ENCODE measurements at regions of chr14 and their contacts with region 1.

Region 1: GRCh38 chr14:91836119-91836881 is 31.0 kb downstream of the TC2N start:
- DNase-seq: peak; percentile 90
- H3K4me3 ChIP-seq: peak overlapping the region; percentile 94
- H3K4me3 Mint-ChIP-seq: peak overlapping the region; percentile 90
- H3K27ac Mint-ChIP-seq: peak overlapping the region; percentile 81
- H3K4me1 ChIP-seq: peaks cover 19% of the 10 kb centered on the region
- H3K4me1 Mint-ChIP-seq: peaks cover 9% of the 10 kb centered on the region
- H3K27me3 ChIP-seq: no peaks in the 10 kb centered on the region
- H3K27me3 Mint-ChIP-seq: no peaks in the 10 kb centered on the region
- CTCF ChIP-seq: no peak

Region 2: DNA sequence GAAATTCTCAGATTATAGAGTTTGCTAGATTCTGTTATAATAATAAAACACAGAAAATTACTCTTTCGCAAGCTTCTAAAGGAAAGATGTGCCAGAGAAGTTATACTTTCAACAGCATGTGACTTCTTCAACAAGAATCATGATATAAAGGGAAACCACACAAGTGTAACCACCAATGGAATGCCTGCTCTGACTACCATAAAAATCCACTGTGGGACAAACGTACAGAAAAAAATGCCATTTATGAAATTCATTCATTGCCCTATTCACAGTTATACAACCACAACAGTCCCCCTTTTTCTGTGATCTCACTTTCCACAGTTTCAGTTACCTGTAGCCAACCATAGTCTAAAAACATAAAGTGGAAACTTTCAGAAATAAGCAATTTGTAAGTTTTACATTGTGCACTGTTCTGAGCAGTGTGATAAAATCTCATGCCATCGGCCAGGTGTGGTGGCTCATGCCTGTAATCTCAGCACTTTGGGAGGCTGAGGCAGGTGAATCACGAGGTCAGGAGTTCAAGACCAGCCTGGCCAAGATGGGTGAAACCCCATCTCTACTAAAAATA is 107.6 kb before region 1 on chr14:
- CTCF ChIA-PET with region 1: no interaction called
- POLR2A ChIA-PET with region 1: no interaction called
- intact Hi-C with region 1: loop called (anchors 10 kb)
- DNase-seq: no peak
- H3K4me3 ChIP-seq: no peak overlapping the region
- H3K4me3 Mint-ChIP-seq: no peak overlapping the region
- H3K27ac Mint-ChIP-seq: no peak overlapping the region
- H3K4me1 ChIP-seq: peaks cover 23% of the 10 kb centered on the region
- H3K4me1 Mint-ChIP-seq: peaks cover 29% of the 10 kb centered on the region
- H3K27me3 ChIP-seq: no peaks in the 10 kb centered on the region
- H3K27me3 Mint-ChIP-seq: no peaks in the 10 kb centered on the region
- CTCF ChIP-seq: no peak

Region 3: GRCh38 chr14:91780452-91780851 is 55.8 kb before region 1 on chr14:
- CTCF ChIA-PET with region 1: no interaction called
- POLR2A ChIA-PET with region 1: interaction called, 3 read pairs
- intact Hi-C with region 1: loop called (anchors 5 kb)
- DNase-seq: peak in 1 of 2 experiments; percentile 63
- H3K4me3 ChIP-seq: no peak overlapping the region
- H3K4me3 Mint-ChIP-seq: peak overlapping the region; percentile 32
- H3K27ac Mint-ChIP-seq: no peak overlapping the region
- H3K4me1 ChIP-seq: peaks cover 21% of the 10 kb centered on the region
- H3K4me1 Mint-ChIP-seq: no peaks in the 10 kb centered on the region
- H3K27me3 ChIP-seq: no peaks in the 10 kb centered on the region
- H3K27me3 Mint-ChIP-seq: no peaks in the 10 kb centered on the region
- CTCF ChIP-seq: no peak

Measured in Caco-2 (cell line).